Cardiac septum (tissue), 1 donor: ENCODE measurements at regions of chr1 and their contacts with region 1.

Region 1: DNA sequence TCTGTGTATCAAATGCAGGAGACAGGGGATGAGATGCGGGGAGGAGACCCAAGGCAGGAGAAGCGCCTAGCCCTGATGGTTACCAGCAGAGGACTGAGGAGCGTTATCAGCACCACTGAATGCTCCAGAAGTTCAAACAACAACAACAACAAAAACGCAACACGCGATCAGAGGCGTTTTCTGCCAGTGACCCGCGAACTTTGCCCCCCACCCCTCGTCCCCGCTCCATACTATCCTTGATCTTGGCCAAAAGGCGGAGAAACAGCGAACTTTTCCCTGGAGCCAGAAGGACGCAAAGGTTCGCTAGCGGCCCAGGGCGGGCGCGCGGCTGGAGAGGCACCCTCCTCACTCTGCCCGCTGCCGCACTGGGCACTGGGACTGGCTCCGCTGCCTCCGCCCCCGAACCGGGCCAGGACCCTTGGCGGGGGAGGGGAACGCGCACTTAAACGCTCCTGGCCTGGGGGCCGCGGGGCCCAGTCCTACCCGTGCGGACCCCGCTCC is 699 bp downstream of the ECHDC2 start:
- DNase-seq: peak; percentile 81

Region 2: GRCh38 chr1:52904927-52905698 is 15.7 kb before region 1 on chr1:
- intact Hi-C with region 1: loop called (anchors 2 kb)
- DNase-seq: no peak